ENCODE measurements at regions of chr1 and their contacts with region 1.

Region 1: GRCh38 chr1:87084244-87084836 is 169.9 kb downstream of the HS2ST1 start:
- DNase-seq: no peak
- H3K4me3 ChIP-seq: no peak overlapping the region
- H3K27me3 ChIP-seq: no peaks in the 10 kb centered on the region
- CTCF ChIP-seq: peak; percentile 35

Region 2: DNA sequence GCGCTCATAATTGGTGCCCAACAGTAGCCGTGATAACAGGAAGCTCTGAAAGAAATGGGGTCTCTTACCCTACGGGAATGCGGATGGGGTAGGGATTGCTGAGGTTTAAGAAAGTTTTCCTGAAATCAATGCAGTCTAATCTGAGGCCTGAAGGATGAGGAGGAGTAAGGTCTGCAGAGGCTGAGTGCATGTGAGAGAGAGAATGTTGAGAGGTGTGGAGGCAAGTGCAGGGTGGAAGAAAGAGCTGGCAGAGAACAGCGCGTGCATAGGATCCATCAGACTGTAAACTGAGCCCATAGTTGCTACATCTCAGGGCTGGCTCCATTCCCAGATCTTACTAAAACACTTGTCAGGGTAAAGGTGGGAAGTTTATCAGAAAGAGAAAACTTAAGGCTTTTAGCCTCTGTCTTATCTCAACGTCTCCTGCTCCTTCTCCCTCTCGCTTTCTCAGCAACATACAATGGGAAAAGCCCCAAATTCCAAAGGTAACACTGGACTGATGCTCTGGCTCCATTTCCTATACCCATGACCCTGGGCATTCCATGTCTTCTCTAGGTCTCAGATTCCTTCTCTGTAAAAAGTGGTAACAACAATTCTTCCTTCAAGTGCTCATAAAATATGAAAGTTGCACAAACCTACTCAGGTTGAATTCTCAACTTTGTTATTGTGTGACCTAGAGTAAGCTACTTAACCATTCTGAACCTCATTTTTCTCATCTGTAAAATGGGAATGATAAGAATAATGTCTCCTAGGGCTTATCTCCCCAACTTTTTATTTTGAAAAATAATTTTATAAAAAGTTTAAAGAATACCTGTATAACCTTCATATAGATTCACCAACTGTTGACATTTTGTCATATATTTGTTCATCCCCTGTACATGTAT is 304.8 kb before region 1 on chr1:
- CTCF ChIA-PET with region 1: interaction called, 20 read pairs
- POLR2A ChIA-PET with region 1: no interaction called
- DNase-seq: no peak
- H3K4me3 ChIP-seq: no peak overlapping the region
- H3K27me3 ChIP-seq: no peaks in the 10 kb centered on the region
- CTCF ChIP-seq: no peak

Region 3: GRCh38 chr1:86833461-86834215 is 250.7 kb before region 1 on chr1:
- CTCF ChIA-PET with region 1: interaction called, 42 read pairs
- POLR2A ChIA-PET with region 1: interaction called, 3 read pairs
- DNase-seq: peak; percentile 26
- H3K4me3 ChIP-seq: no peak overlapping the region
- H3K27me3 ChIP-seq: no peaks in the 10 kb centered on the region
- CTCF ChIP-seq: peak; percentile 57

Region 4: DNA sequence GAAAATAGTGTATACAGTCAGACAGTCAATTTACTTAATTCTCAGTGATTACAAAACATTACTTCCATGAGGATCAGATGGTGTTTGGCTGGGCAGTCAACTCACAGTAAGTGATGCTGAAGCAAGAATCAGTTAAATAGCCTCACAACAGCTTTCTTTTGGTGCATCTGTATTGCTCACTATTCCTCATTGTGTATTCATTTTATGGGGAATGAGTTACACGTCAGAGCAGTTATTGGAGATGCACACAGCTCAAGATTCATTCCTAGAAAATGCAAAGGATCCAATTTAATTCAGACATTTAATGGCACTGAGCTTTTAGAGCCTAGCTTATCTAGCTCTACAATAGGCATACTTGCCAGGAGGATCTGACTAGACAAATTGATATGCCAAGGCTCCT is 19.4 kb before region 1 on chr1:
- CTCF ChIA-PET with region 1: interaction called, 11 read pairs
- POLR2A ChIA-PET with region 1: no interaction called
- DNase-seq: no peak
- H3K4me3 ChIP-seq: no peak overlapping the region
- H3K27me3 ChIP-seq: no peaks in the 10 kb centered on the region
- CTCF ChIP-seq: no peak

Region 5: GRCh38 chr1:87074001-87074795 is 10.1 kb before region 1 on chr1:
- CTCF ChIA-PET with region 1: interaction called, 34 read pairs
- POLR2A ChIA-PET with region 1: no interaction called
- DNase-seq: no peak
- H3K4me3 ChIP-seq: no peak overlapping the region
- H3K27me3 ChIP-seq: no peaks in the 10 kb centered on the region
- CTCF ChIP-seq: no peak